ENCODE measurements at regions of chr12 and their contacts with region 1.

Region 1: GRCh38 chr12:56688129-56688845 is at the start of gene PTGES3:
- DNase-seq: peak; percentile 91
- ATAC-seq: peak; percentile 82
- H3K4me3 ChIP-seq: peak within 1 kb of the TSS; percentile 96 to 98 (median 98)
- H3K27ac ChIP-seq: peak within 1 kb of the TSS; percentile 99
- H3K4me1 ChIP-seq: peaks cover 17% of the 10 kb centered on the region
- H3K27me3 ChIP-seq: no peaks in the 10 kb centered on the region; a peak in 1 of 5 replicates
- CTCF ChIP-seq: 0 out of 2 replicates have a peak, but pooled peaks have one; percentile 3
- EP300 ChIP-seq: no peak; a peak in 1 of 4 replicates
- POLR2A ChIP-seq: peak; percentile 58 to 75
- RAD21 ChIP-seq: no peak
- total RNA-seq, gene PTGES3: 159 and 290 TPM in 2 replicates

Region 2: GRCh38 chr12:56645717-56646446 is 42.4 kb before region 1 on chr12 and contains the start of gene ATP5F1B:
- CTCF ChIA-PET with region 1: no interaction called
- POLR2A ChIA-PET with region 1: interaction called, 18 read pairs
- in situ Hi-C with region 1: no loop called
- intact Hi-C with region 1: loop called (anchors 2 kb)
- DNase-seq: peak; percentile 100
- ATAC-seq: peak; percentile 99
- H3K4me3 ChIP-seq: peak within 1 kb of the TSS; percentile 75 to 89 (median 77)
- H3K27ac ChIP-seq: peak within 1 kb of the TSS; percentile 84
- H3K4me1 ChIP-seq: peaks cover 35% of the 10 kb centered on the region
- H3K27me3 ChIP-seq: no peaks in the 10 kb centered on the region; a peak in 1 of 5 replicates
- CTCF ChIP-seq: no peak
- EP300 ChIP-seq: no peak
- POLR2A ChIP-seq: peak; percentile 99
- RAD21 ChIP-seq: no peak; the same call in 1 of the 2 replicates
- total RNA-seq, gene ATP5F1B: 1,051 and 1,399 TPM in 2 replicates

Region 3: DNA sequence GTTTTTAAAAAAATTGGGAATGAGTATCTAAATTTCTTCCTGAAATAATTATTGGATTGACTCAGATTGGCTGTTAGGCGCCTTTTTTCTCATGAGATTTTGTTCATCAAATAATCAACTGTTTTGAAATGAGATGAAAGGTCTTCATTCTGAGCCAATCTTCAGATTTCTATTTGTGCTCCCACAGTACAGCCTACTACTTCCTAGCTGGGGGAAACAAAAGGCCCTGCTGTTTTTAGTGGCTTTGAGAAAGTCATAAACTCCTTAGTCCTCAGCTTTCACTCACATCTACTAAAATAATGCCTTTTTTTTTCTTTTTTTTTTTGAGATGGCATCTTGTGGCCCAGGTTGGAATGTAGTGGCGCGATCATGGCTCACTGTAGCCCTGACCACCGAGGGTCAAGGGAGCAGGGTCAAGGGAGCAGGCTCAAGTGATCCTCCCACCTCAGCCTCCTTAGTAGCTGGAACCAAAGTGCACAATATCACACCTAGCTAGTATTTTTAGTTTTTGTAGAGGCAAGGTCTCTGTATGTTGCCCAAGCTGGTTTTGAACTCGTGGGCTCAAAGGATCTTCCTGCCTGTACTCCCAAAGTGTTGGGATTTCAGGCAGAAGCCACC is 21.6 kb after region 1 on chr12:
- CTCF ChIA-PET with region 1: no interaction called
- POLR2A ChIA-PET with region 1: interaction called, 11 read pairs
- in situ Hi-C with region 1: no loop called
- intact Hi-C with region 1: no loop called
- DNase-seq: no peak
- ATAC-seq: peak; percentile 62
- H3K4me3 ChIP-seq: no peak overlapping the region
- H3K27ac ChIP-seq: no peak overlapping the region
- H3K4me1 ChIP-seq: peaks cover 5% of the 10 kb centered on the region; the same call in 1 of the 2 replicates
- H3K27me3 ChIP-seq: no peaks in the 10 kb centered on the region
- CTCF ChIP-seq: no peak
- EP300 ChIP-seq: no peak
- POLR2A ChIP-seq: no peak
- RAD21 ChIP-seq: no peak

Region 4: GRCh38 chr12:56931474-56931978 is 243.2 kb after region 1 on chr12:
- CTCF ChIA-PET with region 1: no interaction called
- POLR2A ChIA-PET with region 1: no interaction called
- in situ Hi-C with region 1: no loop called
- intact Hi-C with region 1: no loop called
- DNase-seq: peak; percentile 27
- ATAC-seq: peak; percentile 60; the same call in 2 of the 3 replicates
- H3K4me3 ChIP-seq: peak overlapping the region in 1 of 3 experiments; percentile 36; a peak in 1 of 6 replicates
- H3K27ac ChIP-seq: no peak overlapping the region
- H3K4me1 ChIP-seq: peaks cover 32% of the 10 kb centered on the region
- H3K27me3 ChIP-seq: no peaks in the 10 kb centered on the region
- CTCF ChIP-seq: no peak
- EP300 ChIP-seq: no peak
- POLR2A ChIP-seq: no peak
- RAD21 ChIP-seq: no peak

Measured in HepG2 (cell line).